ENCODE measurements at regions of chr3 and their contacts with region 1.

Region 1: DNA sequence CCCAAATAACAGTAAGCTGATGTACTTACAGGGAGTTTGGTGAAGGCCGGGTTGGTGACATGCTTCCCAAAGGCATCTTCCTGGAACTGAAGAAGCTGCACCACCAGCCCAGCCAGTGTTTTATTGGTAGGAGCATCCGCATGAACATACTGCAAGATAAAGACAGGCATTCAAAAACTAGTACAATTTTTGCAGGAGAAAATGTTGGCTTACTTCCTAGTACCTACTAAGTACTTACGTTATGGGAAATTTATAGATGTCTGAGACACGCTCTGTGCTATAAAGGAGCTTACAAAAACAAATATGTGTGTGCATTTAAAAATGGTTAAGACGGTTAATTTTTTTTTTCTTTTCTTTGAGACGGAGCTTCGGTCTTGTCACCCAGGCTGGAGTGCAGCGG is 8.9 kb downstream of the SMARCC1 start:
- DNase-seq: no peak
- ATAC-seq: no peak
- H3K4me3 ChIP-seq: no peak overlapping the region
- H3K27ac ChIP-seq: no peak overlapping the region
- H3K4me1 ChIP-seq: peaks cover 0 to 6% of the 10 kb centered on the region in 2 experiments; a peak in 3 of 5 replicates
- H3K27me3 ChIP-seq: no peaks in the 10 kb centered on the region
- CTCF ChIP-seq: no peak
- EP300 ChIP-seq: no peak
- POLR2A ChIP-seq: no peak
- RAD21 ChIP-seq: no peak

Region 2: GRCh38 chr3:47722859-47723258 is 49.9 kb before region 1 on chr3:
- CTCF ChIA-PET with region 1: no interaction called
- POLR2A ChIA-PET with region 1: no interaction called
- in situ Hi-C with region 1: no loop called
- intact Hi-C with region 1: no loop called
- DNase-seq: peak in 2 of 4 experiments; percentile 22 to 34
- ATAC-seq: peak; percentile 65
- H3K4me3 ChIP-seq: no peak overlapping the region
- H3K27ac ChIP-seq: no peak overlapping the region
- H3K4me1 ChIP-seq: peaks cover 10 to 12% of the 10 kb centered on the region in 2 experiments
- H3K27me3 ChIP-seq: no peaks in the 10 kb centered on the region
- CTCF ChIP-seq: no peak
- EP300 ChIP-seq: peak; percentile 82
- POLR2A ChIP-seq: no peak
- RAD21 ChIP-seq: no peak

Region 3: GRCh38 chr3:47762233-47762632 is 10.6 kb before region 1 on chr3:
- CTCF ChIA-PET with region 1: no interaction called
- POLR2A ChIA-PET with region 1: interaction called, 34 read pairs
- in situ Hi-C with region 1: no loop called
- intact Hi-C with region 1: no loop called
- DNase-seq: peak; percentile 64 to 78 (median 70)
- ATAC-seq: peak; percentile 79
- H3K4me3 ChIP-seq: no peak overlapping the region
- H3K27ac ChIP-seq: peak overlapping the region; percentile 65
- H3K4me1 ChIP-seq: peaks cover 17% of the 10 kb centered on the region in 2 experiments; a peak in 4 of 5 replicates
- H3K27me3 ChIP-seq: no peaks in the 10 kb centered on the region
- CTCF ChIP-seq: no peak
- EP300 ChIP-seq: peak; percentile 92
- POLR2A ChIP-seq: no peak
- RAD21 ChIP-seq: no peak

Region 4: DNA sequence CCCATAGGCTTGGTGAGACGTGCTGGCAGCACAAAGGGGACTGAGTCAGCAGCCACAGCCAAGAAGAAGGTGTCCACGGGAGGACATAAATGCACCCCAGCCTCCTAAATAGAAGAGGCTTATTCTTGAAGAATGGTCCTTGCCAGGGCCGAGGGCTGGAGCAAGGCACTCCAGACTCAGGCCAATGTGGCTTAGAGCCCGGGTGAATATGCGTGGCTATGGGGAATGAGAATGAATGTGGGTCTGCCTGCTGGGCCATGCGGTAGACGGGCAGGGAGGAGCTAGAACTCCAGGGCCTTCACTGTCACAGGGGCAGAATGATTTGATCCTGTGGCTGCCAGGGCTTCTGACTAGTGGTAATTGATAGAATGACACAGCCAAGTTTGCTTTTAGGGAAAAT is 64.2 kb after region 1 on chr3:
- CTCF ChIA-PET with region 1: no interaction called
- POLR2A ChIA-PET with region 1: no interaction called
- in situ Hi-C with region 1: no loop called
- intact Hi-C with region 1: no loop called
- DNase-seq: no peak
- ATAC-seq: peak; percentile 8; the same call in 2 of the 3 replicates
- H3K4me3 ChIP-seq: no peak overlapping the region
- H3K27ac ChIP-seq: no peak overlapping the region
- H3K4me1 ChIP-seq: no peaks in the 10 kb centered on the region
- H3K27me3 ChIP-seq: no peaks in the 10 kb centered on the region
- CTCF ChIP-seq: no peak
- EP300 ChIP-seq: no peak
- POLR2A ChIP-seq: no peak
- RAD21 ChIP-seq: no peak

Measured in K562 (cell line).